Lower leg skin (tissue), 4 donors: ENCODE measurements at regions of chr19 and their contacts with region 1.

Region 1: DNA sequence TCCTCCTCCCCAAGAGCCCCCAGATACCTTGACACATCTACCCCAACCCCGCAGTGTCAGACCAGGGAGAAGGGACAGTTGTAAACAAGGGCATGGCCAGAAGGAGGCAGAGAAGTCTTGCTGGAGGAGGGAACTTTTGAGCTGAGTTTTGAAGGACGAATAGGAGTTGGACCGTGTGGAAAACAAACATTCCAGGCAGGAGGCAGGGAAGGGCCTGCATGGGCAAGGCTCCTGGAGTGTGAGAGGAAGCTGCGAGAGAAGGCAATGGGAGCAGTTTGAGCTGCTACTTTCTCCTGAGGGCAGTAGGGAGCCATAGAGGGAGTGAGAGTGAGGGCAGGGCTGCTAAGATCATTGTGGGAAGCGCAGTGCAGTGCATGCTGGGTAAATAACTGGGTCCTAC is 23.3 kb downstream of the IL12RB1 start:
- DNase-seq: no peak
- H3K4me3 ChIP-seq: no peak overlapping the region
- CTCF ChIP-seq: no peak
- POLR2A ChIP-seq: no peak

Region 2: DNA sequence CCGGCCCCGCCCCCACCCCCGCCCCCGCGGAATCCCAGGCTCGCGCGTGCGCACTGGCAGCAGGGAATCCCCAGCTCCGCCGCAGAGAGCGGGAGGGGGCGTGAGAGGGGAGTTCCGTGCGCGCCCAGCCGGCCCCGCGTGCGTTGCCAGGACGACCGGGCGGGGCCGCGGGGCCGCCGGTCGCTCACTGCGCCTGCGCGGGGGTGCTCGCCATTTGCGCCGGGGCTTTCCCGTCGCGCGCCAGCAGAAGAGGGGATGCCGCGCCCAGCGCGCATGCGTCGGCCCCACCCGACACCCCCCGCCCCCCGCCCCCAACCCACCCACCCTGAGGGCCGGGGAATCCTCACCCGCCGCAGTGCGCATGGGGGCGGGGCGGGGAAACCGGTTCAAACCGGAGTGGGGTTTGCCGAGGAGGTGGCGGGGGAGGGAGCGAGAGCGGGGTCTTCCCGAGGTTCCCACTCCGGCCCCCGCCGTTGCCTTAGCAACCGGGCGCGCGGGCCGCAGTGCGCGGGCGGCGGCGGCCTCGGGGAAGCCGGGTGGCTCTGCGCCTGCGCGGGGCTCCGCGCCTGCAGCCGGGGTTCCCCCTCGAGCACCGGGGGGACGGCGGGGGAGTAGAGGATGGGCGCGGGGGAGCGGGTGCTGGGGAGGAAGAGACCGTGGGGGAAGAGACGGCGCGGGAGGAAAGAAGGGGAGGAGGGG is 115.5 kb before region 1 on chr19:
- intact Hi-C with region 1: loop called (anchors 10 kb)
- DNase-seq: peak; percentile 84 to 97
- H3K4me3 ChIP-seq: peak overlapping the region; percentile 35
- CTCF ChIP-seq: no peak
- POLR2A ChIP-seq: no peak